Left lung (tissue), 14 donors: ENCODE measurements at regions of chr4 and their contacts with region 1.

Region 1: GRCh38 chr4:168923526-168924194 is 86.4 kb downstream of the CBR4 start:
- DNase-seq: peak in 2 of 4 donors; percentile 69 to 84
- ATAC-seq: peak; percentile 87
- H3K4me3 ChIP-seq: no peak overlapping the region
- H3K27ac ChIP-seq: no peak overlapping the region
- H3K4me1 ChIP-seq: no peaks in the 10 kb centered on the region
- H3K27me3 ChIP-seq: no peaks in the 10 kb centered on the region
- CTCF ChIP-seq: peak; percentile 49 to 72

Region 2: DNA sequence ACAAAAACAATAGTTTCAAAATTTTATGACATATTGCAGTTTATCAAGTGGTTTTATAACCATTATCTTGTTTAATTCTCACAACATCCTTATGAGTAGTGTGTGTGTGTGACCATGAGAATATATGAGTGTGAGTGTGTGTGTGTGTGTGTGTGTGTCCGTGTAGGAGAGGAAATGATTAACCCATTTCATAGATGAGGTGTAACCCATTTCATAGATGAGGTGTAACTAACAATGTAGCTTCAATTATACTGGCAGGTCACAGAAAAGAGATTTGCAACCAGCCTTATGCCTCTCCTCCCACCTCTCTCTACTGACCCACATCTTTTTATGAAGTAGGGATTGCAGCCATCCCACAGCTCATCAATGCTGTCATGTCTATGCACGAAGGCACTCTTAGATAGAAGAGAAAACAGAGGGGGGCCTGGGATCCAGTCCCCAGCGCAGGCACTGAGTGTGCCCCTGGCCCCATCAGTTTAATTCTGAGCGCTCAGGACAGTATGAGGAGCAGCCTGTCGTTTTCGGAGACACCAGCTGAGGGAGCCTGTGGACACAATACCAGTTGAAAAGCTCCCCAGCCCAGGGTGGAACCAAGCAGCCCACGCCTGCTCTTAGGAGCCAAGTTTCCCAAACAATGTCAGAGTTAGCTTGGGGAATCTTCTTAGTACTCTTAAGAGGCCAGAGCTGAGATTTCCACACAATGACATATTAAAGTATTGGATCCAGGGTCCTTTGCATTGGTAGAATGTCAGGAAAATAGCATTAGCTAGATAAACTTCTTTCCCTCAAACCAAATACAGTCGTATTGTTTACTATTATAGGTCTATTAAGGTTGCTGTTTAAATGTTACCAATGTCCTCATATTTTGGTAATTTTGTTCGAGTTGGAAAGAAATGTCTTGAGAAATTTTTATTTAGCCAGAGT is 338.2 kb before region 1 on chr4:
- intact Hi-C with region 1: loop called in 1 of 2 experiments (anchors 10 kb)
- DNase-seq: peak in 2 of 4 donors; percentile 76
- ATAC-seq: peak; percentile 98
- H3K4me3 ChIP-seq: no peak overlapping the region
- H3K27ac ChIP-seq: peak overlapping the region in 1 of 2 donors; percentile 0
- H3K4me1 ChIP-seq: peaks cover 0 to 7% of the 10 kb centered on the region in 2 donors
- H3K27me3 ChIP-seq: no peaks in the 10 kb centered on the region
- CTCF ChIP-seq: peak; percentile 56 to 65

Region 3: DNA sequence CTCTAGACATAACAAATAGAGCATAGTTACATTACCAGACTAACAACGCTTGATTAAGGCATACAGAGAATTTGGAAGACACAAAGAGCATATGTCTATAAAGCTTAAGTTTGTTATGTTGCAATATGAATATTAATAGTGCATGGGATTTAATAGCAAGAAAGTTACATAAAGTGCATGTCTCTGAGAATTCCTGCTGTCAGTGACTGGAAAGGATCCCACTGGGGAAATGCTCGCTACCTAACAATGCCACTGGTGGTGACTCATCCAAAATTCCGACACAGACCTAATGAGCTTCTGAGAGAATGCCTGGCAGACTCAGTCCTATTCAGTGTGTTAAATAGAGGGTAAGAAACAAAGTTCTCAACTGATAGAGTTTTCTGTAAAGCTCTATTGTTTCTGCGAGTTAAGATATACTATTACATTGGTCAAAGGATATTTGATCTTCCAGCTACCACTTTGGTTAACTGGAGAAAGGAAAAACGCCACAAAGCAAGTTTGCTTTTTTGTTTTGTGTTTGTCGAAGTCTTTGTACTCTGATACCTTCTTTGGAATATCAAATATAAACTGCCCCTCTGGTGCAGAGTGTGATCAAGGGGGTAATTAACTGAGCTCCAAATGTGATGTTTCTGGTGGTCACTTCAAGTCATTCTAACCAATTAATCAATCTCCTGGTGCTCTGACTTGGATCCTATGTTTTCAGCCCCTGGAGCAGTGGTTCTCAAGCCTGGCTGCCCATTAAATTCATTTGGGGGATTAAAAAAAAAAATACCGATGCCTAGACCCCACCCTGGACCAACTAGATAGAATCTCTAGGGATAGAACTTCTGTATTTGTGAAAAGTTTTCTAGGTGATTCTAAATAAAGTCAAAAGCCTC is 318.9 kb before region 1 on chr4:
- intact Hi-C with region 1: no loop called
- DNase-seq: peak in 2 of 4 donors; percentile 18 to 21
- ATAC-seq: peak; percentile 85
- H3K4me3 ChIP-seq: no peak overlapping the region
- H3K27ac ChIP-seq: no peak overlapping the region
- H3K4me1 ChIP-seq: no peaks in the 10 kb centered on the region
- H3K27me3 ChIP-seq: no peaks in the 10 kb centered on the region
- CTCF ChIP-seq: no peak

Region 4: DNA sequence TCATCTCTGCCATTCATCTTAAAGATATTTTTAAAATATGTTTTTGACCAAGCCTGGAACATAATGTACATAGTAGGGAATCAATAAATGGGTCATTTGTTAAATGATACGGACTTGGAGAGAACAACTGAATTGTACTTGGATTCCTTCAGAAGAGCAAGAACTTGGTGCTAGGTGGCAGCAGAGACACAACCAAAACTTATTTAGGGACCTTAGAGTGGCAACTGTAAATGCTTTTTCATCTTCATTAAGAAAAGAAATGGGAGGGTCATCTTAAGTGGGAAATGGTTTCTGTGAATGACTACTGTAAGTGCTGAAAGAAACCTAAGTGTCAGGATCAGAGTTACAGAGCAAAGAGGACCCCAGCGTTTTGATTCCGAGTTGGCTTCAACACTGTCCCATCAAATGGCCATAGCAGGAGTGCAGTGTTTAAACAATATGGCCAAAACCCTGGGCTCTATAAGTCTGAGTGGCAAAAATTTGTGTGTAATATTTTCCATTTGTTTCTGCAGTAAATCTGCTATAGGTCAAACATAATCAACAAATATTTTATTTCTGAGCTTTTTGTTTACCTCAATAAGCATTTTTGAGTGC is 213.2 kb before region 1 on chr4:
- intact Hi-C with region 1: loop called in 1 of 2 experiments (anchors 5 kb)
- DNase-seq: peak in 1 of 4 donors; percentile 69
- ATAC-seq: peak; percentile 66
- H3K4me3 ChIP-seq: no peak overlapping the region
- H3K27ac ChIP-seq: no peak overlapping the region
- H3K4me1 ChIP-seq: no peaks in the 10 kb centered on the region
- H3K27me3 ChIP-seq: no peaks in the 10 kb centered on the region
- CTCF ChIP-seq: peak in 1 of 2 donors; percentile 35

Region 5: DNA sequence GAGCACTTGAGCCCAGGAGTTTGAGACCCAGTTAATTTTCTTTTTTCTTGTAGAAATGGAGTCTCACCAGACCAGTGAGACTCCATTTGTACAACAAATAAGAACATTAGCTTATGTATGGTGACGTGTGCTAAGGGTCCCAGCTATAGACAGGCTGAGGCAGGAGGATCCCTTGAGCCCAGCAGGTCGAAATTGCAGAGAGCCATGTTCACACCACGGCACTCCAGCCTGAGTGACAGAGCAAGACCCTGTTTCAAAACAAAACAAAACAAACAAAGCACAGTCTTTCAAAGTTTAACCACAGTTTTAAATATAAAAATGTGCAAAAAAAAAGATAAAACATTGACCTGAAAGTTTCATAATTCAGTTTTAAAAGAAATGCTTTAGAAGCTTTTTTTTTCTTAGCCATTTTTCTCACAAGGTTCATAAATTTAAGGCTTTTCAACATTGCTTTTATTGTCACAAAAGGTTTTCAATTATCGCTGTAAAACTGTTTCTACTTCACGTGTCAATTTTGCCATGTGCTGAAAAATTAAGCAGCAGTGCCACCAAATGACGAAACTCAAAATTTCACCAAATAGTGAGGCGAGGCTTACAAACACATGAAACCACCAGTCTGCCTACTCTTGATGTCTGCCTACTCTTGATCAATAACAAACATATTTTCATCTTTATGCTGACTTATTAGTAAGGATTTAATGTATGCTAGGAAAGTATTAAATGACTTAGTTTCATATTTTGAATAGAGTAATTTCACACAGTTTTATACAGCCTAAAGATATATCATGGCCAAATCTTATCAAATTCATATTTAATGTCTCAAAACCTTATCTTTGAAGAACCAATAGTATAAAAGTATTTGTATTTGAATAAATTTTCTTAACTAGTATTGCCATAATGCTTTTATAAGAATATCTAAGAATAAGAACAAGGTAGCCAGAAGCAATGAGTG is 562.4 kb after region 1 on chr4:
- intact Hi-C with region 1: loop called in 1 of 2 experiments (anchors 5 kb)
- DNase-seq: peak in 2 of 4 donors; percentile 59 to 65
- ATAC-seq: peak; percentile 75
- H3K4me3 ChIP-seq: no peak overlapping the region
- H3K27ac ChIP-seq: no peak overlapping the region
- H3K4me1 ChIP-seq: peaks cover 0 to 4% of the 10 kb centered on the region in 2 donors
- H3K27me3 ChIP-seq: no peaks in the 10 kb centered on the region
- CTCF ChIP-seq: peak; percentile 15 to 29